Gastrocnemius medialis (tissue), 4 donors: ENCODE measurements at regions of chr1 and their contacts with region 1.

Region 1: GRCh38 chr1:162003826-162004208 is 19.9 kb downstream of the OLFML2B start:
- DNase-seq: peak in 1 of 2 donors; percentile 38
- ATAC-seq: peak; percentile 50 to 55
- H3K4me3 ChIP-seq: peak overlapping the region; percentile 17 to 33 (median 26)
- H3K27ac ChIP-seq: peak overlapping the region; percentile 61 to 72 (median 65)
- H3K4me1 ChIP-seq: peaks cover 12 to 14% of the 10 kb centered on the region in 2 donors
- H3K27me3 ChIP-seq: peaks cover 0 to 2% (median 0%) of the 10 kb centered on the region in 3 donors
- CTCF ChIP-seq: no peak
- POLR2A ChIP-seq: peak in 1 of 2 donors; percentile 21

Region 2: DNA sequence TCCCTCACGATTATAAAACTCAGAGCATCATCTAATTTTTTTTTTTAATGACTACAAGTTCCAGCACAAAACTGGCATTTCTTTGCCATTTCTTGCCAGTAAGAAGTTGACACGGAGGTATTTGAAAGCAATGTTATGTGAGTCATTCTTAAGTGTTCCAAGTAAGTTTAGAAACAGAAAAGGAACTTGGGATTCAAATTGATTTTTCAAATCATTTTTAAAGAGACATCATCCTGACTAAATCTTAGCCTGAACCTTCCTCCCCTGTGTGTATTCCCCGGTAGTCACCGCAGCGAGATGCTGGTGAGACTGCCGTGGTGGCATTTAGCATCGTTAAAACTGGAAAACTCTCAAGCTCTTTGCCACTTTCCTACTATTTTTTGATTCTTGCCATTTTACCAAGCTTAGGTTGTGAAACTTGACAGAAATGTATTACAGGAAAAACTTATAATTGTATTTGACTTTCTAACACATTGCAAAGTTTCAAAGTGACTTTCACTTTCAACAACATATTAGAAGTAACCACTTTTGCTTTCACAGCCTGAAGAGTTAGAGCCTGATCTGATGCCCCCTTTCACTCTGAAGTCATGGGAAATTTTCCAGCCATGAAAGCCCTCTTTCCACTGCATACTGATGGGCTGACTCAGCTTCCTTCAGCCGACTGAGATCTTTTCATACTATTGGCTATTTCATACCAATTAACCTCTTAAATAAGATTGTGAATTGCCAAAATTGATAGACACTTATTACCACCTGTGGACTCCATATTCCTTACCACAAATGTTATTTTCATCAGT is 41.5 kb before region 1 on chr1:
- in situ Hi-C with region 1: no loop called
- intact Hi-C with region 1: loop called (anchors 5 kb)
- DNase-seq: no peak
- ATAC-seq: peak; percentile 51 to 58
- H3K4me3 ChIP-seq: peak overlapping the region in 3 of 4 donors; percentile 20 to 34 (median 24)
- H3K27ac ChIP-seq: peak overlapping the region; percentile 41 to 62 (median 48)
- H3K4me1 ChIP-seq: peaks cover 3 to 5% of the 10 kb centered on the region in 2 donors
- H3K27me3 ChIP-seq: no peaks in the 10 kb centered on the region
- CTCF ChIP-seq: no peak
- POLR2A ChIP-seq: no peak